Kidney (tissue), 22 donors: ENCODE measurements at regions of chr15 and their contacts with region 1.

Region 1: DNA sequence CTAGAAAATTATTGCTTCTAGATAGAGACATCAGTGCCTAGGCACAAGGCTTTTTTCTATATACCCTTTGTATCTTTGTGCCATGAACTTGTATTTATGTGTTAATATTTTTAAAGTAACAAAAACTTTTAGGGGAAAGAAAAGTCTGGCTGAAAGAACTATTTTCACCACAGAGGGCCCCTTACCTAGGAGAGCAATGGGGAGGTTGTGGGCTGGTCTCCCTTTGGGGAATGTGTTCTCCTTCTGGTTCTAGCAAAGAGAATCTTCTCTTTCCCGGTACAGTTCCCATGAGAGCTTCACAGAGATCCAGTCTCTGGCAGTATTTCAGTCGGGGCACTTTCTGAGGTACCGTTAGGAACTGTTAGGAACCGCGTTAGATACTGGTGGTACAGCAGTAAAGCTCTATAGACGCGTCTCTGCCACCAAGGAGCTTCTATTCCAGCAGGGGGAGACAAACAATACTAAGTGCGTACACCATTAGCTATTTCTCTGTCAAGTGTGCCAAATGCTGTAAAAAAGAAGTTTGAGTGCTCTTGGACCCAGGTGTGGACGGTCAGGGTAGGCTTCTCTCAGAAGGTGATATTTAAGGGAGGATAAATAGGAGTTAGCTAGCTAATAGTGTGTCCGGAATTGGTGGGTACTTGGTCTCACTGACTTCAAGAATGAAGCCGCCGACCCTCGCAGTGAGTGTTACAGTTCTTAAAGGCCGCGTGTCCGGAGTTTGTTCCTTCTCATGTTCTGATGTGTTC is 4.6 kb upstream of the EPB42 start:
- DNase-seq: peak in 3 of 5 donors; percentile 31 to 78 (median 72)
- H3K4me3 ChIP-seq: no peak overlapping the region
- H3K27ac ChIP-seq: no peak overlapping the region
- H3K4me1 ChIP-seq: no peaks in the 10 kb centered on the region
- H3K27me3 ChIP-seq: no peaks in the 10 kb centered on the region
- CTCF ChIP-seq: peak; percentile 74

Region 2: DNA sequence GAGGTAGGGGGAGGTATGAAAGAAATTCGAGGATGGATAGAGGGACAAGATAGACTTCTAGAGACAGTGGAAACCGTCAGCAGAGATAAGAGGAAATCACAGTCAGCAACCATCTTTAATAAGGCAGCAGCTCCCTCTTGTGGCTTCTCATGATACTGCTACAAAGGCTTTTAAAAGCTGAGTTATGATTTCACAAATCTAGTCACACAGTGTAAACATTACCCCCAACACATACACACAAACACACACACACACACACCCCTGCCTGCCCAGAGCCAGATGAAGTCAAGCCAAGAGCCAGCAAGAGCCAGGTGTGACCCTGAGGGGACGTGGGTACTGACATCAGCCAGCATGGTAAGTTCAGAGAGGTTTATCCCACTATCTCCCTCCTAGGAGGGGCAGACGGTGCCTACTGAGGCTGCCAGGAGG is 60.2 kb after region 1 on chr15:
- intact Hi-C with region 1: loop called (anchors 10 kb)
- DNase-seq: peak; percentile 26 to 76 (median 44)
- H3K4me3 ChIP-seq: no peak overlapping the region
- H3K27ac ChIP-seq: no peak overlapping the region
- H3K4me1 ChIP-seq: no peaks in the 10 kb centered on the region
- H3K27me3 ChIP-seq: no peaks in the 10 kb centered on the region
- CTCF ChIP-seq: peak; percentile 88